ENCODE measurements at regions of chr5 and their contacts with region 1.

Region 1: GRCh38 chr5:151523335-151523734 is 67.8 kb downstream of the FAT2 start:
- DNase-seq: no peak
- ATAC-seq: peak in 1 of 2 donors; percentile 59

Region 2: DNA sequence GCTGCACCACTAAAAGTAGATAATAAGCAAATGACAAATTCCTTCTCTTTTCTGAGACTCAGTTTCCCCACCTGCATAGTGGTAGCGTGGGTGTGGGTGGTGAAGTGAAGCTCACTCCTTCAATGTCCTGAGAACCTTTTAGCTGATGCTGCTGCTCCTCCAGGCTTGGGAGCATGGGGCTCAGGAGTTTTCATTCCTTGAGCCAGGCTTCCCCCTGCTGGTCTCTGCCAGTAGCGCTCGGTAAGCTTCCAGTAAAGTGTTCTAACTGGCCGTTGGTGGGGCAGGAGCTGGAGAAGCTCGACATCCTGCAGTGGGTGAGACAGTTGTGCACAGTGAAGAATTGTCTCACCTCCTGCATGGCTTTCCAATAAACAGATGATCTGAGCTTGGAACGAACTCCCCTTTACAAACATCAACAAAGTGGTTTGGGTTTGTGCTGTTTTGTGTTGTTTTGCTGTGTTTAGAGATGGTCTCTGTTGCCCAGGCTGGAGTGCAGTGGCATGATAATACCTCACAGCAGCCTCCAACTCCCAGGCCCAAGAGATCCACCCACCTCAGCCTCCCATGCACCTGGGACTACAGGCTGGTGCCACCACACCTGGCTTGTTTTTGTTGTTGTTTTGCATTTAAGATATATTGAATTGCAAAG is 128.8 kb after region 1 on chr5:
- intact Hi-C with region 1: loop called (anchors 1 to 5 kb)
- DNase-seq: peak; percentile 83
- ATAC-seq: peak; percentile 93 to 96